Right ventricle myocardium inferior (tissue), 1 donor: ENCODE measurements at regions of chr6 and their contacts with region 1.

Region 1: GRCh38 chr6:142946181-142946923 is 1.4 kb upstream of the HIVEP2 start:
- DNase-seq: peak; percentile 98
- ATAC-seq: peak; percentile 90

Region 2: DNA sequence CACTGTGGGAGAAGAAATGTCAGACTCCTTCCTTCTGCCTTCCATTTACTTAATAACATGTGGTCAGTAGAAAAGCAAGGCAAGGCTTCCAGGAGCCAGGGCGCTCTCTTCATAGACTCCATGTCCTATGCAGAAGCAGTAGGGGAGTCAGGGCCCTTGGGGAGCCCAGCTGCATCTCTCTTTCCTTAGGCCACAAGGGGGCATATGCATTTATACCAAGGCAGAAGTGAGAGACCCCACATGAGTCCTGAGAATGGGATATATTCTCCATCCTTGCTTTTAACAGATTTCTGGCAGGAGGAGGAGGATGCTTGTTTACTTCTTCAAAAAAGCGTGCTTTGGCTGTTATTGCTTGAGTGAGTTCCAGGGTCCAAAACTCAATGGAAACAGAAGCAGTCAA is 199.8 kb before region 1 on chr6:
- intact Hi-C with region 1: loop called (anchors 5 kb)
- DNase-seq: no peak
- ATAC-seq: no peak

Region 3: DNA sequence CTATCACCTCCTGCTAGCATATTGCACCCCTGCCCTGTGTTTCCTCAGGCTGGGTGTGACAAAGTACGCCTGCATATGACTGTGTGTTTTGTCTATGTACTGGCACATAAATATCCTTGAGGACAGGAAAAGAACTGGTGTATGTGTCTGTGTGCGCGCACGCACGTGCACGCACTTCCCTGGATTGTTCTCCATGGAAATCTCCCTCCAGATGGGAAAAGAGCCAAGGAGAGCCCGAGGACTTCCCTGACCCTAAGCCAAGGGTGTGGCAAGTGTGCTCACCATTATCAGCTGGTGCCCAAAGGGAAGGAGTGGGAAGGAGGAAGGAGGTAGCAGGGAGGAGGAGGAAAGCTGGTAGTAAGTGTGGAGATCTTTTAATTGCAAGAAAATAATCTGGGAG is 119.0 kb before region 1 on chr6:
- intact Hi-C with region 1: loop called (anchors 5 kb)
- DNase-seq: no peak
- ATAC-seq: peak; percentile 47

Region 4: DNA sequence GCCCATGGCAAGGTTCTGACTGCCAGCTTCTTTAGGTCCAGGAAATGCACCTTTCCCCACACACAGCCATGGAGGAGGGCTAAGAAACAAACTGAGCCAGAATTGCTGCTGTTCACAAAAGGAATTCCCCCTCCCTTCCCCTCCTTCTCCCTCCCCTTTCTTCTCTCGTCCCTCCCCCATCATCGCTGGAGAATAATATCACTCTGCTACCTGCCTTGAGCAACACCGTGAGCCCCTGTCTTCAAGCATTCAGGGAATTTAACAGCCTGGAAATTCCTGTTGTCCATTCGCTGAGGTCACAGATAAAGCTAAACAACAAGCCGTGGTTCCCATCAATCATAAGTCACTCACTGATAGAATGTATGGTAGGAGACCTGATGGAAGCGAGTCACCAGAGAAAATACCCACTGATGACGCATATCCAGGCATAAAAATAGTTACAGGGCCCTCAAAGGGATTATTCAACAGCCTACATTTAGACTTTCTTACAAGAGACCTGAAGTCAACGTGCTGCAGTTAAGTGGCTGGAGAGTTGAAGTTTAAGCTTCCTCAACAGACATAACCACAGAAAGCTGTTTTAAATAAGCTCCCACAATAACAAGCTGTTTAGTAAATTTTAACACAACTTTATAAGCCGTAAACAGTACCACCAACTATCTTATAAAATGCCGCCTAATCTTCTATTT is 61.0 kb before region 1 on chr6:
- intact Hi-C with region 1: loop called (anchors 2 kb)
- DNase-seq: no peak
- ATAC-seq: peak; percentile 90

Region 5: DNA sequence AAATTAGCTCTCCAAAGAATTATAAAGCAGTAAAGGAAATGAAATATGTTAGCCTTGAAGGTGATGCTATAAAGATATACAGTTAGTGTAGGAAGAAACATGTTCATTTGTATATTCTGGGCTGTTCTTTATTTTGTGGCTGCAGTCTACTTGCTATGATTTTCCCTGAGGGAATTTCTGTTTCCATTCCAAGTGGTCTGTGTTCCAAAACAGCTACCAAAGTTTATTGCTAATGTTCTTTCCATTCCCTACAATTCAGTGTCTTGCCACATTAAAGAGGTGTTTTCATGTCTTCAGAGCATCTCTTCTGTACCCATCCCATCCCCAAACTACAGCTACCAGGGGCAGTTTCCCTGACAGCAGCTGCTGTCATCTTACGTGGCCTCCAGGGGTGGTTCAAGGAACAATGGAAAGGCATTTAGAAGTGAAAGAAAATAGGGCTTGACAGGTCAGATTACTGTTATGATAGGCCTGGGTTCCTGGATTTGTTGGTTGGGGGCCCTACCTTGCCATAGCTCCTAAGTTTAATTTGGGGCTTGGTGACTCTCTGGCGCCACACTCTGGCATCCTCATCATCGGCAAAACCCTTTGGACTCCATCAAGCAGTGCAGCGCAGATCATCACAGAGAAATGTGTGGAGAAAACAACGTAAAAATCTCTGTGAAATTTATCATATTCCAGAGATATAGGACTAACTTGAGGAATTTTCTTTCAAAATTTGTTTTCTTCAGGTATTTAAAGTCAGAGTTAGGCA is 80.5 kb after region 1 on chr6:
- intact Hi-C with region 1: loop called (anchors 5 kb)
- DNase-seq: peak; percentile 60
- ATAC-seq: no peak

Region 6: DNA sequence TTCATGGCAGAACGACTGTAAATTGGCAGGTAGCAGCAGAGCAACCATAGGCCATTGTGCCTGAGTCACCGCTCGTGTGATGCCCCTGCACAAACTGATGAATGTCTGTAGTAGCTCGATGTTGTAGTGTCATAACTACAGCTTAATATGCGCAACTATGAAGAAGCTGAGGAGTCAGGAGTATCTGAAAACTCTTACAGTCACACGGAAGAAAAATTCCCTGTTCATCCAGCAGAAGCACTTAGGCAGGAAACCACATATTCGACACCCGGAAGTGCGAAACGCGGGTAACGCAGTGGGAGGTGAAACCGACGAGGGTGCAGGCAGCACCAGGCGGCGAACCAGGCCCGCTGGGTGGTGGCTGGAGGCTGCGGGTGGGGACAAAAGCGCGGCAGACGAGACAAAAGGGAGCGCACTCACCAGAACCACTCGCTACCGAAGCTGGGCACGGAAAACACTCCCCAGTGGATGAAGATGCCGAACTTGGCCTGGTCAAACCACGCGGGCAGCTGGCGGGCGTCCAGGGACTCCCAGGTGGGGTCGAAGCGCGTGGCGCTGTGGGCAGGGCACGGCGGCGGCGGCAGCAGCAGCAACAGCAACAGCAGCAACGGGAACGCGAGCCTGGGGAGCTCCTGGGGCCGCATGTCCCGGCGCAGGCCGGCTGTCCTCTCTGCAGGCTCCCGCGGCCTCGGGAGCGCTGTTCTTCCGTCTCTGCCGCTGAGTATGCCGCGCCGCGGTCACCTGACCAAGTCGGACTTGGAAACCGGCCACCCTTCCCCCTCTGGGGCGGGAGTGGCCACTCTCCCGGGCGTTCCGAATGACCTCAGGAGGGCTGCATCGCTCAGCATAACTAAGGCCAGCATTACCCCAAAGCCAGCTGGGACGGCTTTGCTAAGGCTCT is 564.9 kb after region 1 on chr6 and contains the start of gene FUCA2:
- intact Hi-C with region 1: loop called (anchors 5 kb)
- DNase-seq: peak; percentile 96
- ATAC-seq: peak; percentile 92
- total RNA-seq, gene FUCA2: 46.1 TPM